PC-9 (cell line): ENCODE measurements at regions of chr2 and their contacts with region 1.

Region 1: GRCh38 chr2:55961318-55961911 is 37.8 kb upstream of the EFEMP1 start:
- DNase-seq: peak; percentile 27 to 52
- H3K4me3 ChIP-seq: no peak overlapping the region
- H3K27ac ChIP-seq: no peak overlapping the region
- H3K4me1 ChIP-seq: peaks cover 20% of the 10 kb centered on the region
- H3K27me3 ChIP-seq: no peaks in the 10 kb centered on the region
- CTCF ChIP-seq: peak; percentile 93

Region 2: GRCh38 chr2:55617175-55618024 is 344.0 kb before region 1 on chr2 and contains the start of gene PPP4R3B:
- CTCF ChIA-PET with region 1: no interaction called
- POLR2A ChIA-PET with region 1: no interaction called
- intact Hi-C with region 1: no loop called
- DNase-seq: peak; percentile 100
- H3K4me3 ChIP-seq: peak within 1 kb of the TSS; percentile 100
- H3K27ac ChIP-seq: peak within 1 kb of the TSS; percentile 90
- H3K4me1 ChIP-seq: peaks cover 23% of the 10 kb centered on the region
- H3K27me3 ChIP-seq: no peaks in the 10 kb centered on the region
- CTCF ChIP-seq: peak; percentile 48; the same call in 1 of the 2 replicates
- total RNA-seq, gene PPP4R3B: 66.2 and 73.4 TPM in 2 replicates

Region 3: GRCh38 chr2:55718165-55719008 is 243.0 kb before region 1 on chr2:
- CTCF ChIA-PET with region 1: no interaction called
- POLR2A ChIA-PET with region 1: no interaction called
- intact Hi-C with region 1: loop called (anchors 1 kb)
- DNase-seq: peak; percentile 53 to 58
- H3K4me3 ChIP-seq: no peak overlapping the region
- H3K27ac ChIP-seq: no peak overlapping the region
- H3K4me1 ChIP-seq: peaks cover 17% of the 10 kb centered on the region
- H3K27me3 ChIP-seq: no peaks in the 10 kb centered on the region
- CTCF ChIP-seq: peak; percentile 97

Region 4: DNA sequence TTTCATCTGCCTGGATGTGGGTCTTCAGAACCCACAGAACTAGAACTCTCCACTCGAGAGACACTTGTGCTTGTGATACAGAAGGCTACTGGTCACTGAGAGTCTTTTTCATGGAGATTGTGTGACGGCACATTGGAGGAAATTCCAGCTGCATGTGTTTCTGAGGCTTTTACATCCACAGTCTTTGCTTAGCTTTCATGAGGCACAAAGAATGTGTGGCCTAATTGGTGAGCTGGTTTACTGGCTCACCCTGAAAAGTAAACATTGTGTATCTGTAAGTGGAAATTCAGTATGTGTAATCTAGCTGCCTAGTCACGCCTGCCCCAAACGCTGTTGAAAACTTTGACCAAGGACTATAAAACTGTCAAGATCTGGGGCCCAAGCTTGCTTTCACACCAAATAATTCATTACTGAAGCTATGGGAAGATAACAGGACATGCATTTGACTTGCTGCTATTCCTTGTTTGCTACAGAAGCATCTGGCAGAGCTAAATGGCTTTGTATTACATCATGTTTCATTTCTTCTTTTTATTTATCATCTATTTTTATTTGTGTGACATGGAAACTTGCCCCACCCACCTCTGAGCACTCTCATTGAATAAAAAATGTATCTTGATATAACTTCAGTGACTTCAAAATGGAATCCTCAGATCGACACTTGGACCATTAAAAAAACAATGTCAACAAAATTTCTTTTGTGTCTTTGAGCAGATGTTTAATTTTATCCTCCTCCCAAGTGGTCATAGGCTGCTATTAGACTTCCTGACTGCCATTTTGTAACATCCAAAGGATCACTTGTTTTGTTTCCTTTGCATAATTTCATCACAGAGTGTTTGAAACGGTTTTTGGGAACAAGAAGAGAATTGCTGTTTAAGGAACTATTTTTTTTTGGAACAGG is 118.1 kb before region 1 on chr2:
- CTCF ChIA-PET with region 1: no interaction called
- POLR2A ChIA-PET with region 1: no interaction called
- intact Hi-C with region 1: loop called (anchors 1 kb)
- DNase-seq: peak; percentile 39 to 96
- H3K4me3 ChIP-seq: 0 out of 2 replicates have a peak overlapping the region, but pooled peaks have one; percentile 6
- H3K27ac ChIP-seq: peak overlapping the region; percentile 70
- H3K4me1 ChIP-seq: peaks cover 67% of the 10 kb centered on the region
- H3K27me3 ChIP-seq: no peaks in the 10 kb centered on the region
- CTCF ChIP-seq: no peak

Region 5: DNA sequence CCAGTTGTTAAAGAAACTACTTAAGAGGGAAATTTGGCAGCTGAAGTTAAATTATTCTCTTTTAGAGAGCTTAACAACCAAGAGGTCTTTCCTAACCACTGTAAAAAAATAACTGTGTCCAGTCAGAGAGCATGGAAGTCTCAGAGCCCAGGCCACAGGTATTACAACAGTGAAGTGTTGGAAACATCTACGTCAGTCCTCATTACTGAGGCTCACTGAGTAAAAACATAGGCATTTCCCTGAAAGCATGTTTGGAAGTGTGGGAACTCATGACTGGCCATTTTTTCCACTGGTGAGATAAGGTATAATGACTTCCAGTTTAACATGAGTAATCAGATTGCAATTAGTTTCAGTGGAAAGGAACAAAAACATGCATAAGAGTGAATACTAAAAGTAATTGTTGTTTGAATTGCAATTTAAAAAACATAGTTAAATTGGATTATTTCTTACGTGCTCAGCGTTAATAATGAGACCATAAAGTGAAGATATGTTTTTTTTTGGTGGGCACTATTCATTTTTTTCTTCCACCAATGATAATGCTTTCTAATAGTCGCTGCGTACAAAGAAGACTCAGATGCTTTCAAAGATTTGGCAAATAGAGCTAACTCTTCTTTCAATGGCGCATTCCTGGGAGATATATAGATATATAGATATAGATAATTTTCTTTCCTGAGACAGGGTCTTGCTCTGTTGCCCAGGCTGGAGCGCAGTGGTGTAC is 98.6 kb before region 1 on chr2:
- CTCF ChIA-PET with region 1: interaction called, 3 read pairs
- POLR2A ChIA-PET with region 1: no interaction called
- intact Hi-C with region 1: loop called (anchors 1 kb)
- DNase-seq: peak; percentile 65 to 99
- H3K4me3 ChIP-seq: no peak overlapping the region
- H3K27ac ChIP-seq: peak overlapping the region; percentile 80
- H3K4me1 ChIP-seq: peaks cover 32% of the 10 kb centered on the region
- H3K27me3 ChIP-seq: no peaks in the 10 kb centered on the region
- CTCF ChIP-seq: no peak

Region 6: GRCh38 chr2:55992465-55992864 is 31.1 kb after region 1 on chr2:
- CTCF ChIA-PET with region 1: no interaction called
- POLR2A ChIA-PET with region 1: no interaction called
- intact Hi-C with region 1: loop called (anchors 1 kb)
- DNase-seq: peak; percentile 63 to 77
- H3K4me3 ChIP-seq: no peak overlapping the region
- H3K27ac ChIP-seq: no peak overlapping the region
- H3K4me1 ChIP-seq: peaks cover 8% of the 10 kb centered on the region; the same call in 1 of the 2 replicates
- H3K27me3 ChIP-seq: no peaks in the 10 kb centered on the region
- CTCF ChIP-seq: no peak